ENCODE measurements at regions of chr1 and their contacts with region 1.

Region 1: DNA sequence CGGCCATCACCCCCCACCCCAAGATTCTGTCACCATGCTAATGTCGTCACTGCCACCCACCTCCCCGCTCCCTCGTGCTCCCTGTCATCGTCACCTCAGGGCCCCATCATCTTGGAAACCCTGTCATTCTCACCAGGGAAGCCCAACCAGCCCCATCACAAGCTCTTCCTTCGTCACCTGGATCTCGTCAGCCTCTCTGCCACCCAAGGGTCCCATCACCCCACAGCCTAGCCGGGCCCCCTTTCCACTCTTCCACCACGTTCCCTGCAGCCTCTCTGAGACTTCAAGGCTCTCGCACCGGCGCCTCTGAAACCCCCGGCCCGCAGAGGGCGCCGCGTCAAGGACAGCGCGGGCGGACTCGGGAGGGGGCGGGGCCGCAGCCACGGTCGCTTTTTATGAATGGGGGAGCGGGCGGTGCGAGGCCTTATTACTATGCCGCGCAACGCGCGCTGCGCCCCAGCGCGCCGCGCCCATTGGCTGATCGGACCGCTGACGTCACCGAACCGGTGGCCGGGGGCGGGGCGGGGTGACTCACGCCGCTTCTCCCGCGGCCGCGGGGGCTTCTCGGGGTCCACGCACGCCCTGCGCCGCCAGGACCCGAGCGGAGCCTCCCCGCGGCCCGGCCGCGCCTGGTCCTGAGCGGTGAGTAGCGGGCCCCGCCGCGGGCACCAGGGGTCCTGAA is at the start of gene GPR3:
- DNase-seq: peak; percentile 95
- ATAC-seq: peak; percentile 94
- H3K4me3 Mint-ChIP-seq: peak within 1 kb of the TSS; percentile 74
- H3K27ac Mint-ChIP-seq: peak within 1 kb of the TSS; percentile 76
- H3K4me1 Mint-ChIP-seq: peaks cover 8% of the 10 kb centered on the region
- H3K27me3 Mint-ChIP-seq: peaks cover 21% of the 10 kb centered on the region
- total RNA-seq, gene GPR3: 0.44 to 0.49 TPM

Region 2: GRCh38 chr1:27192039-27192529 is 200.2 kb before region 1 on chr1:
- CTCF ChIA-PET with region 1: no interaction called
- DNase-seq: no peak
- ATAC-seq: no peak
- H3K4me3 Mint-ChIP-seq: no peak overlapping the region
- H3K27ac Mint-ChIP-seq: no peak overlapping the region
- H3K4me1 Mint-ChIP-seq: no peaks in the 10 kb centered on the region
- H3K27me3 Mint-ChIP-seq: peaks cover 2% of the 10 kb centered on the region

Region 3: DNA sequence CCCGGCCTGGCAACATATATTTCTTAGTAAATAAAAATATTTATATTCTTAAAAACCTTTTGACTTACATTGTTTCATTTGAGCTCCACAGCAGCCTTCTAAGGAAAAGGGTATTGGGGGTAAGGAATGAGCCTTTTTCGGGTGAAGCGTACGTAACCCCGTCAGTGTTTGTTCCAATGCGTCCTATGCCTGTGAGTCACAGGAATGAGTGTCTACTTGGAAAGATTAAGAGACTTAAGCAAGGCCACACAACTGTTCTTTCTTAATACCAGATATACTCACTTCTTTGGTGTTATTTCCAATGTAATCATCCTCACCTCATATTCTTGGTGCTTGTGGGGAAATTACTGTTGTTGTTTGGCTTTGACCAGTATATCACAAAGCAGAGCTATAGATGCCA is 135.1 kb before region 1 on chr1:
- CTCF ChIA-PET with region 1: no interaction called
- DNase-seq: no peak
- ATAC-seq: no peak
- H3K4me3 Mint-ChIP-seq: no peak overlapping the region
- H3K27ac Mint-ChIP-seq: no peak overlapping the region
- H3K4me1 Mint-ChIP-seq: peaks cover 9% of the 10 kb centered on the region
- H3K27me3 Mint-ChIP-seq: no peaks in the 10 kb centered on the region

Region 4: DNA sequence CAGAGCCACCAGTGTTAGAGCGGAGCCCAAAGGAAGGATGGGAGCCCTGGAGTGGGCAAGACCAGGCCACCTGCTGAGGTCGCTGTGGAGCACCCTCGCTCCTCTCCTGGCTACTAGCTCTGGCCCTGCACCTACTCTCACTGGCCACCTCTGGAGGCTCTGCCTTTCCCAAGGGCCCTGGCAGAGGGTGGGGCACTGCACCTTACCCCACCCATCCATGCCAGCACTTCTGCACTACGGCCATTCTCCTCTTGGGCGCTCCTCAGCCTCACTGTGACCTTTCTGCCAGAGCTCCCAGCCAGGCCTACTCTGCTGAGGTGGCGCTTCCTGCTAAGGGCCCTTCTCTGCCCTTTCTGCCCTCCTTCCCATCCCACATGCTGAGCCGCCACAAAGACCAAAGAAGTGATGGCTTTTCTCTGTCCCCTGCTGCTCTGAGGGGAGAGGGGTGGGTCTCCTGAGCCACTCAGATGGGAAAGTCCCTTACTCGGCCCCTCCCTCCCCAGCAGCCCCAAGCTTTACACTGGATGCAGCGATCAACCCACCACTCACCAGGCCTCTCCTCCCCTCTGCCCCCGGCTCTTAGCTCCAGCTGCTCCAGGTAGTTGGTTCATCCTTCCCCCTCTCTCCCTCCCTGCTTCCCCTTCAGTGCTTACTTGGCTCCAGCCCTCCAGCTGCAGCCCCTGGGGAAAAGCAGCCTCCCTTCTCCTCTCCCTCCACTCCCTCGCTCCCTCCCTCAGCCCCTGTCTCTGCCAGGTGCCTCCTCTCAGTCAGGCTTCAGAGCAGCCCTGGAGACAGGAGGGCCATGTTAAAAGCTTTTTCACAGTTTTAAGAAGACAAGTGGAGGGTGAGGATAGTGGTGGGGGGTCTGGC is 85.1 kb before region 1 on chr1:
- CTCF ChIA-PET with region 1: interaction called, 331 read pairs
- DNase-seq: no peak
- ATAC-seq: no peak
- H3K4me3 Mint-ChIP-seq: no peak overlapping the region
- H3K27ac Mint-ChIP-seq: no peak overlapping the region
- H3K4me1 Mint-ChIP-seq: no peaks in the 10 kb centered on the region
- H3K27me3 Mint-ChIP-seq: no peaks in the 10 kb centered on the region

Region 5: GRCh38 chr1:27332536-27333281 is 59.5 kb before region 1 on chr1:
- CTCF ChIA-PET with region 1: interaction called, 33 read pairs
- DNase-seq: peak; percentile 61
- ATAC-seq: peak; percentile 77
- H3K4me3 Mint-ChIP-seq: no peak overlapping the region
- H3K27ac Mint-ChIP-seq: peak overlapping the region; percentile 57
- H3K4me1 Mint-ChIP-seq: peaks cover 20% of the 10 kb centered on the region
- H3K27me3 Mint-ChIP-seq: no peaks in the 10 kb centered on the region

Region 6: DNA sequence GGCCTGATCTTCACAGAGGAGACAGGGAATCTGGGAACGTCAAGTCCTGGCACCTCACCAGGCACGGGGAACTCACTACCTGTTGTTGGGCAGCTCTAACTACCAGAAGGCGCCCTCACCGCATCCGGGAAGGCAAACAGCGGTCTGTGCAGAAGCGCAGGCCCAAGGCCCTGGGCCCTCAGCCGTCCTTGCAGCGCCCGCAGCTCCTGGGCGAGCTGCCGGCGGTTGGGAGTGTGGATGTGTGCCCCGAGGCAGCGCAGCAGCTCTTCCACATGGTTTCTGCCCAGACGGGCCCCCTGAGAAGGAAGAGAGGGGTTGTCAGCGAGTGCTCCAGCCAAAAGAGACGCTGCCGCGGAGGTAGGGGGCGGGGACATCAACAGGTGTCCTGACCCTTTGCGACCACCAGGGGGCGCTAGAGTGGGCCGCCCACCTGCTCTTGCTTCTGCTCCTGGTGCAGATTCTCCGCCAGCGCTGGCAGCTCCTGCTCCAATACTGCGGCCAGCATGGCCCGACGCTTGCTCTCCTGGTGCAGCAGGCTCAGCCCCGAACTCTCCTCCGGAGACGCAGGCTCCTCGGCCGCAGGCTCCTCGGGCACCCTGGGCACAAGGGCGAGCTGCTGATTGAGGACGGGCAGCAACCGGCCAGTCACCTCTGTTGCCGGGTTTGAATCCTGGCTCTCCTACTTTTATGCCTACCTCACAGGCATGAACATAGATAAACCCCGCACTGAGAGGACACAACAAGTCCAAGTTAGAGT is 34.8 kb before region 1 on chr1:
- CTCF ChIA-PET with region 1: interaction called, 47 read pairs
- DNase-seq: peak; percentile 87
- ATAC-seq: peak; percentile 76
- H3K4me3 Mint-ChIP-seq: peak overlapping the region; percentile 73
- H3K27ac Mint-ChIP-seq: peak overlapping the region; percentile 93
- H3K4me1 Mint-ChIP-seq: peaks cover 44% of the 10 kb centered on the region
- H3K27me3 Mint-ChIP-seq: peaks cover 8% of the 10 kb centered on the region

Region 7: GRCh38 chr1:27603681-27604578 is 211.7 kb after region 1 on chr1 and contains the start of gene AHDC1:
- CTCF ChIA-PET with region 1: interaction called, 128 read pairs
- DNase-seq: peak; percentile 93
- ATAC-seq: peak; percentile 90
- H3K4me3 Mint-ChIP-seq: peak within 1 kb of the TSS; percentile 94
- H3K27ac Mint-ChIP-seq: peak within 1 kb of the TSS; percentile 70
- H3K4me1 Mint-ChIP-seq: peaks cover 37% of the 10 kb centered on the region
- H3K27me3 Mint-ChIP-seq: no peaks in the 10 kb centered on the region
- total RNA-seq, gene AHDC1: 15.8 to 18.5 TPM

Measured in activated CD8-positive, alpha-beta memory T cell treated with anti-CD3 and anti-CD28 coated beads, Interleukin-2, amount 10 ng/mL, durations not matched to agents 7 days and 5 days (primary cell).